ENCODE measurements at regions of chr12 and their contacts with region 1.

Region 1: GRCh38 chr12:12008931-12009611 is 61.7 kb upstream of the BCL2L14 start:
- DNase-seq: peak; percentile 84
- ATAC-seq: peak; percentile 64
- H3K4me3 Mint-ChIP-seq: peak overlapping the region; percentile 71
- H3K27ac Mint-ChIP-seq: peak overlapping the region; percentile 96
- H3K4me1 Mint-ChIP-seq: peaks cover 77% of the 10 kb centered on the region
- H3K27me3 Mint-ChIP-seq: no peaks in the 10 kb centered on the region

Region 2: DNA sequence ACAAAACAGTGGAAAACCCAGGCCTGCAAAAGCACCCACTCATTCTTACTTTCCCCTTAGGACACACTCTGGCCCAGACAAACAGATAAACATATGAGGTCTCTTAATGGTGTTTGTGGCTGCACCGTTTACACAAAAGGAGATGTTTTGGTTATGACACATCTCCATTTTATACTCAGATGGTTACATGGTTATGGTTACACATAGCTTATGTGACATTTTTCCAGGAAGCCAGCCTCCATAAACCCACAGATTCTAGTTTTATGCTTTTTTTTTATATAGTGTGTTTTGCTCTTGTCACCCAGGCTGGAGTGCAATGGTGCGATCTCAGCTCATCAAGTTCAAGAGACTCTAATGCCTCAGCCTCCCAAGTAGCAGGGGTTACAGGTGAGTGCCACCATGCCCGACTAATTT is 1704.9 kb before region 1 on chr12:
- CTCF ChIA-PET with region 1: no interaction called
- POLR2A ChIA-PET with region 1: no interaction called
- intact Hi-C with region 1: loop called in 1 of 2 experiments (anchors 5 kb)
- DNase-seq: peak; percentile 64
- ATAC-seq: peak; percentile 86
- H3K4me3 Mint-ChIP-seq: no peak overlapping the region
- H3K27ac Mint-ChIP-seq: peak overlapping the region; percentile 19
- H3K4me1 Mint-ChIP-seq: peaks cover 47% of the 10 kb centered on the region
- H3K27me3 Mint-ChIP-seq: peaks cover 21% of the 10 kb centered on the region

Region 3: GRCh38 chr12:11771356-11771755 is 237.7 kb before region 1 on chr12:
- CTCF ChIA-PET with region 1: interaction called, 5 read pairs
- POLR2A ChIA-PET with region 1: interaction called, 19 read pairs
- intact Hi-C with region 1: loop called (anchors 1 to 2 kb)
- DNase-seq: peak; percentile 48
- ATAC-seq: peak; percentile 45
- H3K4me3 Mint-ChIP-seq: no peak overlapping the region
- H3K27ac Mint-ChIP-seq: peak overlapping the region; percentile 79
- H3K4me1 Mint-ChIP-seq: peaks cover 94% of the 10 kb centered on the region
- H3K27me3 Mint-ChIP-seq: no peaks in the 10 kb centered on the region

Region 4: DNA sequence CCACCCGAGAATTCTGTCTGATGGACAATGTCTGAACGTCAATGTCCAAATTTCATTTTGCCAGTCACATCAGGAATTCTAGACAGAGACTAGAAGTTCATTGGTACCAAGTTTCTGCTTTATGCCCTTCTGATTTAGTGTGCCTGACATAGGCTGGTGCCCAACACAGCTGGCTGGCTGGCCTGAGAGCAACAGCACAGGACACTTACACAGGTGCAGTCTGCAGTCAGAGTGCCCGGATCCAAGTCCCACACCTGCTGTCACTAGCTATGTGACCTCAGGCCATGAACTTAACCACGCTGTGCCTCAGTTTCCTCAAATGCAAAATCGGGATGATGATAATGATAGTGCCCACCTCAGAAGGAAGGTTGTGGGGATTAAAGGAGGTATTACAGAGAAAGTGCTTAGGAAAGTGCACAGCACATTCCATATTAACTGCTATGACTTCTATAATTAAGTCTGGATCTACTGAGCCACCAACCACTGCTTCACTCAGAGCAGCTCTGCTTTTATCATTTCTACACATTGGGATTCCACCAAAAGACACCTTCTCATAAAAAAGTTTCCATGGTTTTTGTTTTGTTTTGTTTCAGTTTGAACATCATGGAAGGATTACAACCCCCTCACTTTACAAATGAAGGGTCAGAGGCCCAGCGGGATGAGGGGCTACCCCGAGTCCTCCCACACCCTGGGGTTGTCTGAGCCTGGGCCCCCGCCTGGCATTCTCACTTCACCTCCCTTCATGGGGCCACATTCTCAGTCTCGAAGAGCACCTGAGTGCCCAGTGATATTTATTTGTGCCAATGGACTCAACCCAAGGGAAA is 107.2 kb before region 1 on chr12:
- CTCF ChIA-PET with region 1: interaction called, 3 read pairs
- POLR2A ChIA-PET with region 1: interaction called, 7 read pairs
- intact Hi-C with region 1: loop called (anchors 1 kb)
- DNase-seq: peak; percentile 75
- ATAC-seq: peak; percentile 78
- H3K4me3 Mint-ChIP-seq: peak overlapping the region; percentile 39
- H3K27ac Mint-ChIP-seq: peak overlapping the region; percentile 88
- H3K4me1 Mint-ChIP-seq: peaks cover 44% of the 10 kb centered on the region
- H3K27me3 Mint-ChIP-seq: peaks cover 2% of the 10 kb centered on the region

Region 5: GRCh38 chr12:12024911-12025682 is 16.0 kb after region 1 on chr12:
- CTCF ChIA-PET with region 1: interaction called, 13 read pairs
- POLR2A ChIA-PET with region 1: interaction called, 7 read pairs
- intact Hi-C with region 1: no loop called
- DNase-seq: peak; percentile 68
- ATAC-seq: peak; percentile 66
- H3K4me3 Mint-ChIP-seq: no peak overlapping the region
- H3K27ac Mint-ChIP-seq: peak overlapping the region; percentile 64
- H3K4me1 Mint-ChIP-seq: peaks cover 71% of the 10 kb centered on the region
- H3K27me3 Mint-ChIP-seq: no peaks in the 10 kb centered on the region

Region 6: GRCh38 chr12:12611512-12612306 is 602.6 kb after region 1 on chr12 and contains the start of gene CREBL2:
- CTCF ChIA-PET with region 1: no interaction called
- POLR2A ChIA-PET with region 1: interaction called, 4 read pairs
- intact Hi-C with region 1: loop called in 1 of 2 experiments (anchors 5 kb)
- DNase-seq: peak; percentile 92
- ATAC-seq: peak; percentile 77
- H3K4me3 Mint-ChIP-seq: peak within 1 kb of the TSS; percentile 93
- H3K27ac Mint-ChIP-seq: peak within 1 kb of the TSS; percentile 98
- H3K4me1 Mint-ChIP-seq: peaks cover 68% of the 10 kb centered on the region
- H3K27me3 Mint-ChIP-seq: no peaks in the 10 kb centered on the region
- total RNA-seq, gene CREBL2: 16.8 to 20.2 TPM

Region 7: GRCh38 chr12:12736759-12737676 is 727.9 kb after region 1 on chr12:
- CTCF ChIA-PET with region 1: no interaction called
- POLR2A ChIA-PET with region 1: no interaction called
- intact Hi-C with region 1: no loop called
- DNase-seq: peak; percentile 65
- ATAC-seq: peak; percentile 87
- H3K4me3 Mint-ChIP-seq: peak overlapping the region; percentile 32
- H3K27ac Mint-ChIP-seq: peak overlapping the region; percentile 75
- H3K4me1 Mint-ChIP-seq: peaks cover 35% of the 10 kb centered on the region
- H3K27me3 Mint-ChIP-seq: no peaks in the 10 kb centered on the region

Measured in activated CD4-positive, alpha-beta T cell treated with anti-CD3 and anti-CD28 coated beads for 36 hours (primary cell).